Mammary epithelial cell (primary cell): ENCODE measurements at regions of chr12 and their contacts with region 1.

Region 1: DNA sequence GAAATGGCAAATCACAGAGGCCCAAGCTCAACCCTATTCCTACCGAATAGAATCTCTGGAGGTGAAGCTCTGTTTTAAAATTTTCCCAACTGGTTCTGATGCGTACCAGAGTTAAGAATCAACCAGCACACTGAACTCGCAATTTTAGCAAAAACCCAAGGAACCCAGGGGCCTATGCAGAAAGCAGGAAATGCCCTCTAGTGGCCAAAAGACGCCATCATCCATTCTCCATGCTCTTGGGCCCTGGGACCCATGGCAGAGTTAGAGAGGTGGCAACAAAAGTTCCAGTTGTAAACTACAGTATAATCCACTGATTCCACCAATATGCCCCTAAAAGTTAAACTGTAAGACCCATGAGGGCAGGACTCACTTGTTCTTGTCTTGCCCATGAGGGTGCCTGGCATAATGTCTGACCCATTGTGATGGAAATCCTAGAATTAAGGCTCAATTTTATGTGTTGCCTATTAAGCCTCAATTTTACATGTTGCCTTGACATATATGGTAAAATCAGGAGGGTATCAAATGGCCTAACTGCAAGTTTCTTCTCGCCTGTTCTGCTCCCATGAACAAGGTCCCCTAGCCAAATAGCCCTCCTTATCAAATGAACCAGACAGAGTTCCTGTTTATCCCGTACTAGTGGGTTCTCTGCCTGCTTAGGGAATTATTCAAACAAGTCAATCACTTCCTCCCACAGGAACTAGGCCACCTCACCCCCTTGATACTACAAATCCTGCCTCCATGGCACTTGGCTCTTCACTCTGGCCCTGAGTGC is 137.5 kb upstream of the CPM start:
- DNase-seq: peak; percentile 50
- H3K4me3 ChIP-seq: no peak overlapping the region
- H3K27ac ChIP-seq: no peak overlapping the region
- H3K4me1 ChIP-seq: peaks cover 10% of the 10 kb centered on the region
- H3K27me3 ChIP-seq: peaks cover 3% of the 10 kb centered on the region
- CTCF ChIP-seq: peak; percentile 91 to 94

Region 2: DNA sequence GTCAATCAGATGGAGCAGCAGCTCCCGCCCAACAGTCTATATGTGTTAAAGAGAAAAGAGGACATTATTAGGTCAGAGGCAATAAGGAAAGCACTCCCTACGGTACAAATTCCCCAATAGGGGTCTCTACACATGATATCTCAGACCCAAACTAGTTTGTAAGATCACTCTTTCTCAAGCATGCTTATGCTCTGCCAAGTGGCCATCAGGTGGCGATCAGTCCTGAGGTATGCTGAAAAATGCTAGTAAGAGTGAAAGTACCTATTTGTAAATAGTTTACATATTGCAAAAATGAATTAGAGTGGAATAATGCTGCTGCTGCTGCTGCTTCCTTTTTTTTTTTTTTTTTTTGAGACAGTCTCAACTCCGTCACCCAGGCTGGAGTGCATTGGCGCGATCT is 198.6 kb before region 1 on chr12:
- CTCF ChIA-PET with region 1: no interaction called
- dilution Hi-C with region 1: no loop called
- in situ Hi-C with region 1: loop called in 1 of 2 experiments (anchors 5 kb)
- intact Hi-C with region 1: no loop called
- DNase-seq: no peak
- H3K4me3 ChIP-seq: no peak overlapping the region
- H3K27ac ChIP-seq: no peak overlapping the region
- H3K4me1 ChIP-seq: peaks cover 6% of the 10 kb centered on the region
- H3K27me3 ChIP-seq: no peaks in the 10 kb centered on the region
- CTCF ChIP-seq: peak; percentile 45 to 46

Region 3: GRCh38 chr12:68904351-68904962 is 166.0 kb before region 1 on chr12:
- CTCF ChIA-PET with region 1: no interaction called
- dilution Hi-C with region 1: no loop called
- in situ Hi-C with region 1: loop called in 1 of 2 experiments (anchors 10 kb)
- intact Hi-C with region 1: loop called (anchors 1 kb)
- DNase-seq: peak; percentile 16
- H3K4me3 ChIP-seq: no peak overlapping the region
- H3K27ac ChIP-seq: no peak overlapping the region
- H3K4me1 ChIP-seq: no peaks in the 10 kb centered on the region
- H3K27me3 ChIP-seq: no peaks in the 10 kb centered on the region
- CTCF ChIP-seq: no peak

Region 4: GRCh38 chr12:69149270-69149669 is 78.8 kb after region 1 on chr12:
- CTCF ChIA-PET with region 1: no interaction called
- dilution Hi-C with region 1: no loop called
- in situ Hi-C with region 1: no loop called
- intact Hi-C with region 1: no loop called
- DNase-seq: no peak
- H3K4me3 ChIP-seq: no peak overlapping the region
- H3K27ac ChIP-seq: no peak overlapping the region
- H3K4me1 ChIP-seq: no peaks in the 10 kb centered on the region
- H3K27me3 ChIP-seq: no peaks in the 10 kb centered on the region
- CTCF ChIP-seq: no peak